ENCODE measurements at regions of chr11 and their contacts with region 1.

Region 1: GRCh38 chr11:35845860-35846259 is 98.0 kb upstream of the LDLRAD3 start:
- DNase-seq: no peak

Region 2: DNA sequence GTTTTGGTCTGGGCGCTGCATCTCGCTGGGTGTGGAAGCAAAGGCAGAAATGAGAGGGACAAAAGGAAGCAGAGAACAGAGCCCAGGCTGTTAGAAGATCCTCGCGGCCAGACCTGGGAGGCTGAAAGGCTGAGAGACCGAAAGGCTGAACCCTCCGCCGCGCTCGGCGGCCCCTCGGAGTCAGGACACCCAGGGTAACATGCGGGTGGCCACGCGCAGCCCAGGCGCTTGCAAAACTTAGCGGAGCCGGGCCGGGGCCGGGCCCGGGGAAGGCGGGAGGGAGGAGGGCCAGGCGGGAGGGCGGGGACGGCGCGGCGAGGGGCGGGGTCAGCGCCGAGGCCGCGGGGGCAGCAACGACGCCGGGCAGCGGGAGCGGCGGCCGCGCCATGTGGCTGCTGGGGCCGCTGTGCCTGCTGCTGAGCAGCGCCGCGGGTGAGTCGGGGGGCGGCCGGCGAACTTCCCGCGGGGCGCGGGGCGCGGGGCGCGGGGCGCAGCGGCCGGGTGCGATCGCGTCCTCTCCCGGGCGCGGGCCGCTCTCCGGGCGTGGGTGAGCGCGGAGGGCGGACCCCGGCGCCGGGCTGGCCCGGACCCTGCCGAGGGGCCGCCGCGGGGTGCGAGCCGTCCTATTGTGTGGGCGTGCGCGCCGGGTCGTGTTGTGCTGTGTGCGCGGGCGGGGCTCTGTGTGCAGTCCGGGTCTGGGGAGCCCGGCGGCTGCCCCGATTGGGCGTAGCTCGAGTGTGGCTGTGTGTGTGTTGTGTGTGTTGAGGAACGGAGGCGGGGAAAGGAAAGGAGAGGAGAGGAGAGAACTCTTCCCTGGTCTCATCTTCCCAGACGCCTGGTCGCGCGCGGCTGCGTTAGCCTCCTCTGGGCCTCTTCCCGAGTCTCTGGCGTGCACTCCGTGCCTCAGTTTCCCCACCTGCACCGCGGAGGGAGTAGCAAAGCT is 98.1 kb after region 1 on chr11 and contains the start of gene LDLRAD3:
- in situ Hi-C with region 1: loop called (anchors 25 kb)
- DNase-seq: peak; percentile 61

Region 3: DNA sequence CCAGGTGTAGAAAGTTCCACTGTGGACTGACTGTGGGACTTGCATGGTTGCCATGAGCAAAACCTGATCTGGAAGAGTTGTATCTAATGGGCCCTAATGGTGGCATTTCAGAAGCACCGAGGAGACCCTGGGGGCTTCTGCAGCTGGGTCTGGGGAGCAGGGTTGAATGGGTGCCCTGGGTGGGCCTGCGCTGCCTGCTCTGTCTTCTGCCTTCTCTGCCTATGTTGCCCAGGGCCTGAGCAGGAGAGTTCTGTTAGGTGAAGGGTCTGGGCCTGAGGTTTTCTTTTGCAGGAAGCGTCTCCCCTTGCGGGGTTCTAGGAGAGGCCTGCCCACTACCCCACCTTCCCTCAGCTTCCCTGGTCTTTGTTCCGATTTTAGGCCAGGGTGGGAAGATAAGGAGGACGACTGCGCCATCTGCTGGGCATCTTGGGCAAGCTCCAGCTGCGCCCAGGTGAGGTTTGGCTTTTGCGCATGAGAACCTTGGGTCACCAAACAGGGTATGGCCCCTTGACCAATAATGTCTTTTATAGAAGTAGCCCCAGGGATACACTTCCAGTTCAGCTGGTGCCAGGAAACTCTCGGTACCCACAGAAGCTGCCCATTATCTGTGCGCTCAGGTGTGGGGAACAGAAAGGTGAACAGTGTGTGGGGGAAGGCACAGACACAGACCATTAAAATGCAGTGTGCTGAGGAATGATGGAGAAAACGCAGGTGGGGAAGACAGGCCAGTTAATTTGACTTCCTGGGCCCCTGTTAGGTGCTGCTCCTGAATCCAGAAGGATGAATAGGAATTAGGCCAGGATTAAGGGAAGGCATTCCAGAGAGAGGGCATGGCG is 420.2 kb after region 1 on chr11:
- in situ Hi-C with region 1: loop called (anchors 25 kb)
- DNase-seq: peak; percentile 69

Measured in KBM-7 (cell line).